A673 (cell line): ENCODE measurements at regions of chr6 and their contacts with region 1.

Region 1: DNA sequence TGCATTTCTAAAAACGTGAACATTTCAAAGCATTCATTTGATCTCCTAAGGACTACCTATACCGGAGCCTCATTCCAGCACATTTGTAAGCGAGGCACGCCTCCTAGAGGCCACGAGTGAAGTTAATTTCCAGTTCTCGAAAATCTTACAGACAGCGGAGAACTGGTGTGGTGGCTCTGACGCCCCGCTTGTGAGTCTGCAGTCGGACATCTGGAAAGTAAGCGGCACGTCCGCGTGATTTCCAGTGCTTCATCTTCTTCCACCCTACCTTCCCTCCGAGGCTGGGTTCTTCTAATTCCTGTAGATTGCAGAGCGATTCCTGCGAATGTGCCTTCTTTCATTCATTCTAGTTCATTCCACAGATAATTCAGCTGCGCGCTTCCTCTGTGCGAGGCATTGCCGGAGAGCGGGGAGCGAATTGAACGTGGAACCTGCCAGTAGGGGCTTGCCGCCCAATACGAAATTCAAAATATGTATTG is 810 bp upstream of the PRIM2 start:
- DNase-seq: peak; percentile 96
- H3K4me3 ChIP-seq: peak overlapping the region; percentile 67
- H3K27ac ChIP-seq: peak overlapping the region; percentile 81
- H3K4me1 ChIP-seq: peaks cover 11% of the 10 kb centered on the region
- H3K27me3 ChIP-seq: no peaks in the 10 kb centered on the region
- CTCF ChIP-seq: peak; percentile 89

Region 2: DNA sequence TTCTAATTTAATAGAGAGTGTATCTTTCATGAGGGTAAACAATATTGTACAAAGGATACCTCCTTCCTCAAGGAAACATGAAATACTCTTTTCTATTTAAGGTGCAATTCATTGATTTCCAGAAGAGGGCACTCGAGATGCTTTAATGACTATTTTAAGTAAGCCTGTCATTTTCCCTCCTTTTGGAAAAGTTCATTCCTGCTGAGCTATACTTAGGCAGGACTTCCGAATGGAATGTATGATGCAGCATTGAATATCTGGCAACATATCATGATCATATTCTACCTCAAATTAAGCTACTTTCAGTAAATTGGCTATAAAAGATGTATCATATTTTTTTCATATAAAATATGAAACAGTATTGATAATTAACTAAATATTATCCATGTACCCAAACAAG is 679.0 kb before region 1 on chr6:
- CTCF ChIA-PET with region 1: no interaction called
- POLR2A ChIA-PET with region 1: no interaction called
- intact Hi-C with region 1: loop called (anchors 2 kb)
- DNase-seq: peak; percentile 75
- H3K4me3 ChIP-seq: no peak overlapping the region
- H3K27ac ChIP-seq: no peak overlapping the region
- H3K4me1 ChIP-seq: peaks cover 2% of the 10 kb centered on the region
- H3K27me3 ChIP-seq: no peaks in the 10 kb centered on the region
- CTCF ChIP-seq: peak; percentile 71

Region 3: GRCh38 chr6:56902641-56903464 is 413.8 kb before region 1 on chr6:
- CTCF ChIA-PET with region 1: interaction called, 8 read pairs
- POLR2A ChIA-PET with region 1: no interaction called
- intact Hi-C with region 1: loop called (anchors 2 kb)
- DNase-seq: peak; percentile 65
- H3K4me3 ChIP-seq: no peak overlapping the region
- H3K27ac ChIP-seq: no peak overlapping the region
- H3K4me1 ChIP-seq: no peaks in the 10 kb centered on the region
- H3K27me3 ChIP-seq: no peaks in the 10 kb centered on the region
- CTCF ChIP-seq: peak; percentile 86

Region 4: DNA sequence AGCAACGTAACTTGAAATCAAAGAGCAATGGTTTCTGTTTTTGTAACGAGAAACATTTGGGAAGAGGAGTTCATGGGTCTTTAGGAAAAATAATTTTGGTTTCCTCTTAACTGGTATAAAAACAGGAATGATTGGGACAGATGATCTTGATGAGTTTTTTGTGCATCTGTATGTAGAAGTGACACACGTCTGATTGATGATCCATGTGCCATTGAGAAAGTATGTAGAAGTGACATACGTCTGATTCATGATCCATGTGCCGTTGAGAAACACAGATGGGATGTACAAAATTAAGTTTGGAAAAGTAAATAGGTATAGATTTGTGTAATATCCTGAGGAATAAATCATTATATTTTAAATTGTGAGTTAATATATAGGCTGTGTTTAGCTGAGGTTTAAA is 268.0 kb before region 1 on chr6:
- CTCF ChIA-PET with region 1: no interaction called
- POLR2A ChIA-PET with region 1: no interaction called
- intact Hi-C with region 1: loop called (anchors 5 kb)
- DNase-seq: no peak
- H3K4me3 ChIP-seq: peak overlapping the region; percentile 30
- H3K27ac ChIP-seq: no peak overlapping the region
- H3K4me1 ChIP-seq: peaks cover 11% of the 10 kb centered on the region
- H3K27me3 ChIP-seq: no peaks in the 10 kb centered on the region
- CTCF ChIP-seq: no peak

Region 5: GRCh38 chr6:57190140-57190539 is 126.5 kb before region 1 on chr6:
- CTCF ChIA-PET with region 1: interaction called, 3 read pairs
- POLR2A ChIA-PET with region 1: no interaction called
- intact Hi-C with region 1: loop called (anchors 1 kb)
- DNase-seq: peak; percentile 58
- H3K4me3 ChIP-seq: no peak overlapping the region
- H3K27ac ChIP-seq: no peak overlapping the region
- H3K4me1 ChIP-seq: no peaks in the 10 kb centered on the region
- H3K27me3 ChIP-seq: no peaks in the 10 kb centered on the region
- CTCF ChIP-seq: peak; percentile 51